Natural killer cell (primary cell): ENCODE measurements at regions of chr19 and their contacts with region 1.

Region 1: DNA sequence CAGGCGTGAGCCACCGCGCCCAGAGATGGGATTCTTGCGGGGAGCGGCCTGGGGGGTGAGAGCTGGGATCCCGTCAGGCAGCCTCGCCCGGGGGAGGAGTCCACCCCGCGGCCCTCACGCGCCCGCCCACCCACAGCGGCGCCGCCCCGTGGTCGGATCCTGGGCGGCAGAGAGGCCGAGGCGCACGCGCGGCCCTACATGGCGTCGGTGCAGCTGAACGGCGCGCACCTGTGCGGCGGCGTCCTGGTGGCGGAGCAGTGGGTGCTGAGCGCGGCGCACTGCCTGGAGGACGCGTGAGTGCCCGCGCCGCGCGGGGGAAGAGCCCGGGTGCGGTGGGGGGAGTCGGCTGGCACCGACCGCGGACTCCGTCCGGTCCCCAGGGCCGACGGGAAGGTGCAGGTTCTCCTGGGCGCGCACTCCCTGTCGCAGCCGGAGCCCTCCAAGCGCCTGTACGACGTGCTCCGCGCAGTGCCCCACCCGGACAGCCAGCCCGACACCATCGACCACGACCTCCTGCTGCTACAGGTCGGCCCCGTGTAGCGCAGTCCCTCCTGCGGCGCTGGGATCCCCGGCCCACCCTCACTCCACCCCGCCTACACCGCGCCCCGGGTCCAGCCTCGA is 1.1 kb downstream of the CFD start:
- DNase-seq: peak; percentile 43 to 84
- ATAC-seq: peak; percentile 35 to 47 (median 43)
- H3K4me3 ChIP-seq: no peak overlapping the region
- H3K4me3 Mint-ChIP-seq: peak overlapping the region; percentile 28
- H3K27ac ChIP-seq: no peak overlapping the region
- H3K27ac Mint-ChIP-seq: no peak overlapping the region
- H3K4me1 ChIP-seq: peaks cover 43% of the 10 kb centered on the region
- H3K4me1 Mint-ChIP-seq: peaks cover 12 to 21% of the 10 kb centered on the region in 2 donors
- H3K27me3 ChIP-seq: peaks cover 7% of the 10 kb centered on the region
- H3K27me3 Mint-ChIP-seq: peaks cover 7 to 15% of the 10 kb centered on the region in 2 donors
- CTCF ChIP-seq: no peak

Region 2: DNA sequence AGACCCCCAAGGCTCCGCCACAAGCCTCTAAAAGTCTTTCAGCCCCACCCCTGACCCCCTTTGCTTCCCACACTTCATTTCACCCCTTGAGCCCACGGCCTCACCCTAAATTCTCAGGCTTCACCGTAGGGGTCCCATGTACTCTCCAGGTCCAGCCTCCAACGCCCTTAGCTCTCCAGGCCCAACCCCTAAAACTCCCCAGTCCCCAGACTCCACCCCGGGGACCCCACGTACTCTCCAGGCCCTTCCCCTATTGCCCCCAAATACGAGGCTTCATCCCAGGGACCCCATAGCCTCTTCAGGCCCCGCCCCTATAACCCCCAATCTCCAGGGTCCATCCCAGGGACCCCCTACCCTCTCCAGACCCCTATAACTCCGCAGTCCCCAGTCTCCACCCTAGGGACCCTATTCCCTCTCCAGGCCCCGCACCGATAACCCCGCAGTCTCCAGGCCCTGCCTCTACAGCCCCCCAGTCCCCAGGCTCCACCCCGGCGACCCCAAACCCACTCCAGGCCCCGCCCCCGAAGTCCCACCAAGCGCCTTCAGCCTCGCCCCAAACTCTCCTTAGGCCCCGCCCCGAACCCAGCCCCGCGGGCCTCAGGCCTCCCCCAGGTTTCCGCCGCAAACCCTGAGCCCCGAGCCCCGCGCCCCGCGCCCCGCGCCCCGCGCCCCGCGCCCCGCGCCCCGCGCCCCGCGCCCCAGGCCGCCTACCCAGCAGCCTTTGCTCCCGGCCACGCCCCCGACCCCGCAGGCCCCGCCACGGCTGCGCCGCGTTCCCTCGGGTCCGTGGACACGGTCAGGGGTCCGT is 31.9 kb after region 1 on chr19:
- intact Hi-C with region 1: no loop called
- DNase-seq: peak in 1 of 2 donors; percentile 26
- ATAC-seq: peak; percentile 54 to 68 (median 67)
- H3K4me3 ChIP-seq: peak overlapping the region; percentile 61
- H3K4me3 Mint-ChIP-seq: peak overlapping the region; percentile 97
- H3K27ac ChIP-seq: peak overlapping the region; percentile 98
- H3K27ac Mint-ChIP-seq: peak overlapping the region; percentile 99
- H3K4me1 ChIP-seq: peaks cover 46% of the 10 kb centered on the region
- H3K4me1 Mint-ChIP-seq: peaks cover 9 to 30% of the 10 kb centered on the region in 2 donors
- H3K27me3 ChIP-seq: no peaks in the 10 kb centered on the region
- H3K27me3 Mint-ChIP-seq: no peaks in the 10 kb centered on the region
- CTCF ChIP-seq: no peak

Region 3: GRCh38 chr19:984165-984967 is 123.8 kb after region 1 on chr19 and contains the start of gene WDR18:
- intact Hi-C with region 1: loop called (anchors 5 kb)
- DNase-seq: peak; percentile 90 to 94
- ATAC-seq: peak; percentile 92 to 94 (median 93)
- H3K4me3 ChIP-seq: peak within 1 kb of the TSS; percentile 97
- H3K4me3 Mint-ChIP-seq: peak within 1 kb of the TSS; percentile 97
- H3K27ac ChIP-seq: peak within 1 kb of the TSS; percentile 88
- H3K27ac Mint-ChIP-seq: peak within 1 kb of the TSS; percentile 83 to 94
- H3K4me1 ChIP-seq: peaks cover 39% of the 10 kb centered on the region
- H3K4me1 Mint-ChIP-seq: peaks cover 13 to 22% of the 10 kb centered on the region in 2 donors
- H3K27me3 ChIP-seq: no peaks in the 10 kb centered on the region
- H3K27me3 Mint-ChIP-seq: no peaks in the 10 kb centered on the region
- CTCF ChIP-seq: no peak
- total RNA-seq, gene WDR18: 17.5 to 25.4 (median 22.7) TPM

Region 4: GRCh38 chr19:1001538-1002166 is 141.1 kb after region 1 on chr19:
- intact Hi-C with region 1: loop called (anchors 1 kb)
- DNase-seq: peak; percentile 77 to 78
- ATAC-seq: peak; percentile 81 to 85 (median 81)
- H3K4me3 ChIP-seq: no peak overlapping the region
- H3K4me3 Mint-ChIP-seq: no peak overlapping the region
- H3K27ac ChIP-seq: no peak overlapping the region
- H3K27ac Mint-ChIP-seq: peak overlapping the region in 1 of 2 donors; percentile 16
- H3K4me1 ChIP-seq: peaks cover 23% of the 10 kb centered on the region
- H3K4me1 Mint-ChIP-seq: peaks cover 0 to 10% of the 10 kb centered on the region in 2 donors
- H3K27me3 ChIP-seq: peaks cover 28% of the 10 kb centered on the region
- H3K27me3 Mint-ChIP-seq: peaks cover 16 to 22% of the 10 kb centered on the region in 2 donors
- CTCF ChIP-seq: peak; percentile 94